ENCODE measurements at regions of chr1 and their contacts with region 1.

Region 1: DNA sequence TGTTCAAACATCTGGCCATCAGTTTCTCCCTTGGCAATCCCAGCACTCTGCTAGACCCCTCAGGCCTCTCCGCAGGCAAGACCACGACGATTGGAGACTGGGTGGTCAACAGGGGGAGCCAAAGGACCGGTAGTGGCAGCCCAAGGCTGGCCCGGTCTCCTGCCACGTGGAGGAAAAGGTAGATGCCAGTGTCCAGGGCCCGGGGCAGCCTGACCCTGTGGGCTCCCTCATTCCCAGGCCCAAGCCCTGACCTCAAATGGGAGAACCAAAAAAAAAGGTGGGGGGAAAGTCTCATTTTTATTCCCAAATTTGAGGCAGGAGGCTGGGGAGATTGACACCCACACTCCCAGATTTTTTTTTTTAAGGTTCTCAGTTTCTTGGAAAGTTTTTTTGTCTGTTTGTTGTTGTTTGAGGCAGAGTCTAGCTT is 24.8 kb downstream of the S100A6 start:
- DNase-seq: peak; percentile 92
- ATAC-seq: peak; percentile 39
- H3K4me3 ChIP-seq: no peak overlapping the region
- H3K27ac ChIP-seq: peak overlapping the region; percentile 45
- H3K4me1 ChIP-seq: peaks cover 76% of the 10 kb centered on the region
- H3K27me3 ChIP-seq: no peaks in the 10 kb centered on the region
- CTCF ChIP-seq: peak; percentile 99

Region 2: GRCh38 chr1:153365303-153366095 is 145.5 kb before region 1 on chr1:
- CTCF ChIA-PET with region 1: no interaction called
- POLR2A ChIA-PET with region 1: no interaction called
- intact Hi-C with region 1: no loop called
- DNase-seq: peak; percentile 67
- ATAC-seq: no peak
- H3K4me3 ChIP-seq: no peak overlapping the region
- H3K27ac ChIP-seq: no peak overlapping the region
- H3K4me1 ChIP-seq: peaks cover 24% of the 10 kb centered on the region
- H3K27me3 ChIP-seq: no peaks in the 10 kb centered on the region
- CTCF ChIP-seq: 0 out of 2 replicates have a peak, but pooled peaks have one; percentile 16

Region 3: GRCh38 chr1:153532769-153533599 is 22.0 kb after region 1 on chr1:
- CTCF ChIA-PET with region 1: interaction called, 6 read pairs
- POLR2A ChIA-PET with region 1: interaction called, 5 read pairs
- intact Hi-C with region 1: loop called (anchors 1 kb)
- DNase-seq: peak; percentile 87
- ATAC-seq: peak; percentile 21
- H3K4me3 ChIP-seq: peak overlapping the region; percentile 28; the same call in 1 of the 2 replicates
- H3K27ac ChIP-seq: peak overlapping the region; percentile 94
- H3K4me1 ChIP-seq: peaks cover 46% of the 10 kb centered on the region
- H3K27me3 ChIP-seq: no peaks in the 10 kb centered on the region
- CTCF ChIP-seq: peak; percentile 96

Region 4: GRCh38 chr1:153566440-153567379 is 55.7 kb after region 1 on chr1:
- CTCF ChIA-PET with region 1: interaction called, 24 read pairs
- POLR2A ChIA-PET with region 1: interaction called, 12 read pairs
- intact Hi-C with region 1: loop called (anchors 1 kb)
- DNase-seq: peak; percentile 99
- ATAC-seq: peak; percentile 66
- H3K4me3 ChIP-seq: peak overlapping the region; percentile 42
- H3K27ac ChIP-seq: peak overlapping the region; percentile 100
- H3K4me1 ChIP-seq: peaks cover 60% of the 10 kb centered on the region
- H3K27me3 ChIP-seq: no peaks in the 10 kb centered on the region
- CTCF ChIP-seq: no peak

Region 5: DNA sequence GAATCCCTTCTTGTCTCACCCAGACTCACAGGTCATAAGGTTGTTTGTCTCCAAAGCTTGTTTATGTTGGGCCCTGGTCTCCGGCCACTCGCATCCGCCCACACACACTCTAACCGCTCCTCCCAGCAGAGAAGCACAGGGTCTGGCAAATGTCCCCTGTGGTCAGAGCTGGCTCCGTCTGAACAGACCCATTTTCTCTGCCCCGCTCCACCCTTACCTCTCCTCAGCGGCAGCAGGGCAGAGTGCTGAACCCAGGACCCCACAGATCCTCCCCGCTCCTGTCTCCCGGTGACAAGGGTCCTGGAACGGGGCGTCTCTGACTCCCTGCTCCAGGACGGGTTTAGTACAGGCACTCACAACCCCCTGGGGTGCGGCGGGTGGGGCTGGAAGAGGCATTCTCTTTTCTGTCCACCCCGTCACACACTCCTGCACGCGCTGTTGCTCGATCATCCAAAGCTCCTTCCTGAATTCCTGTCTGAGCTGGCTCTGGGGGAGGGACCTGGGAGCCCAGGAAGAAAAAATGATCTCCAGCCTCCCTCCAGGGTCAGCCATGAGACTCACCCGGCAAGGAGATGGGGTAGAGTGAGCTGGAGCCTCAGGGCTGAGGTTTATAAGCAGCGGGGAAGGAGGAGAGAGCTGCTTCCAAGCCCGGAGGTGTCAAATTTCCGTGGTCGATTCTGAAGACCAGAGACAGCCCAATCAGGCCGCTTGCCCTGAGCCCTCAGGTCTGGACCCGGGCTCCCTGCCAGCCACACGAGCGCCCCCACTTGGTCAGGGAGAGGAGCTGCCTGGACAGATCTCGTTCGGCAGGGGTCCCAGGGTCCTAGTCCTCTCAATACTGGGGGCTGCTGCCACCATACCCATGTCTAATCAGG is 116.2 kb after region 1 on chr1 and contains the start of gene S100A13:
- CTCF ChIA-PET with region 1: interaction called, 16 read pairs
- POLR2A ChIA-PET with region 1: interaction called, 3 read pairs
- intact Hi-C with region 1: no loop called
- DNase-seq: peak; percentile 97
- ATAC-seq: peak; percentile 88
- H3K4me3 ChIP-seq: peak within 1 kb of the TSS; percentile 84
- H3K27ac ChIP-seq: peak within 1 kb of the TSS; percentile 79
- H3K4me1 ChIP-seq: peaks cover 33% of the 10 kb centered on the region
- H3K27me3 ChIP-seq: no peaks in the 10 kb centered on the region
- CTCF ChIP-seq: peak; percentile 95
- total RNA-seq, gene S100A13: 307 and 350 TPM in 2 replicates

Region 6: DNA sequence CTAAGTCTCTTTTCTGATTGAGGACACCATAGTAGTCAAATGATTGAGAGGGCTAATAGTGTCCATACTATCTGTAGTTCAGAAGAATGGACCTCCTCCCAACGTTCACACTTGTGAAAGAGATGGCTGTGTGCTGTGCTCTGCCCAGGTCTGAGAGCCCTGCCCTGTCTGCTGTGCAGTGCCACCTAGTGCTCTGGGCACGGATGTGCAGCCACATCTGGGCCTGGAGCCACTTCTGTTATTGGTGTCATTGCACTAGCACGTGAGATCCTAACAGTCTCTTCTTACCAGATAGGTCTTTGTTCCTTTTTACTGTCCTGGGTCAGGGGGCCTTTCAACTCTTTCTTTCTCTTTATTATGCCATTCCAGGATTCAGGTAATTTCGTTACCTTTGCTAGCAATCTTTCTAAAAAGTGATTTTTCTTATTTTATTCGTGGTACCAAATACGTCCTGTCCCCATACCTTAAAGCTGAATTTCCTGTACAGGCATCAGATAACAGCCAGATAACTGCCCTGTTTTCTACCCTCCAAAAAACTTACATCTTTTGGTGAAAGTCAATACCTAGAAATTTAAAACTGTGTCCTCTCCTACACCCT is 238.5 kb after region 1 on chr1:
- CTCF ChIA-PET with region 1: no interaction called
- POLR2A ChIA-PET with region 1: no interaction called
- intact Hi-C with region 1: loop called (anchors 5 kb)
- DNase-seq: peak; percentile 92
- ATAC-seq: peak; percentile 100
- H3K4me3 ChIP-seq: no peak overlapping the region
- H3K27ac ChIP-seq: no peak overlapping the region
- H3K4me1 ChIP-seq: no peaks in the 10 kb centered on the region
- H3K27me3 ChIP-seq: no peaks in the 10 kb centered on the region
- CTCF ChIP-seq: peak; percentile 99

Measured in PC-3 (cell line).